Thyroid gland (tissue), 4 donors: ENCODE measurements at regions of chr14 and their contacts with region 1.

Region 1: DNA sequence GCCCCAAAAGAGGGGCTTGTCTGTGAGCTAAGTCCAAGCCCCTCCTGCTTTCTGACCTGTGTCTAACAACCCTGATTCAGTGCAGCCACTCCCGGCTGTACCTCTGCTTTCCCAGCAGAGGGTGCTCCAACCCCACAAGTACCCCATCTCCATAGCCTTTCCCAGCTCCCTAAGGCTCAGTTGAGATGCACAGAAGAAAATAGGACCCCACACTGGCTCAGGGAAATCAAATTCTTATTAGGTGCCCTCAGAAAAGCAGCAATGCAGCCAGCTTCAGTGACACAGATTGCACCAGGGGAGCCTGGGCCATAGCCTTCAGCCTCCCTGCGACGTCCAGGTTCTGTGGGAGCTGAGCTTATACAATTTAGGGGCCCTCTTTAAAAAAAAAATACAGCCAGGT is 49.9 kb downstream of the LRRC74A start:
- DNase-seq: peak; percentile 52 to 62
- H3K4me3 ChIP-seq: no peak overlapping the region
- H3K27ac ChIP-seq: no peak overlapping the region
- H3K4me1 ChIP-seq: no peaks in the 10 kb centered on the region
- H3K27me3 ChIP-seq: no peaks in the 10 kb centered on the region
- CTCF ChIP-seq: peak; percentile 68 to 97 (median 95)
- POLR2A ChIP-seq: no peak

Region 2: DNA sequence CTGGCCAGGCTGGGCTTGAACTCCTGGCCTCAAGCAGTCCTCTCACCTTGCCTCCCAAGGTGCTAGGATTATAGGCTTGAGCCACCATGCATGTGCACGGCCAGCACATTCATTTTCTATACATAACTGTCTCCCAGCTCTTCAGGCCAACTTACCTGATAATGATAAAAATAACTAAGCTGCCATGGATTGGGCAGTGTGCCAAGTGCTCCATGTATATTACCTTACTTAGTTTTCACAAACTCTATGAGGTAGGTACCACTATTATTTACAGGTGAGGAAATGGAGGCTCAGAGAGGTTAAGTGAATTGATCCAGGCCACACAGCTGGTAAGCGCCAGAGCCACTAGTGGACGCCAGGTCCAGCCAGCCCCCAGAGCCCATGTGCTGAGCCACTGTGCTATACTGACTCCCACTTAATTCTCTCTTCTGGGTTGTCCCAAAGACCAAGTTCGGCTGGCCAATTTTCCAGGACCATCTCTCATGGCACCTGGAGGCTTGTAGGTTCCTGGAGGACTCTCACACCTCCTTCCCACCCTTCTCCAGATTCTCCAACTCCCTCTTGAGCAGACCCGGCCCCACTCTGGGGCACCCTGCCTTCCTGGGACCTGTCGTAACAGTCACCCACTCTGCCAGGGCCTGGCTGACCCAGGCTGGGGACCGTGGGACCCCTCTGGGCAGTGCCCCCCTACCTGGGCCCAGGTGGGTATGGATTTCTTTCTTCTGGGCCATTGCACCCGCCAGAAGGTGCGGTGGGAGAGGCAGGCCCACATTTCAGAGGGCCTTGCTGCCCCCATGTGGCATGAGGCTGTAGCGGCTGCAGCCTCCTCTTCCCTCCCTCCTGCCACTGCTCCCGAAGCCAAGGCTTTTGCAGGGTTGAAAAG is 191.8 kb after region 1 on chr14:
- intact Hi-C with region 1: loop called (anchors 2 kb)
- DNase-seq: peak; percentile 74 to 76
- H3K4me3 ChIP-seq: no peak overlapping the region
- H3K27ac ChIP-seq: no peak overlapping the region
- H3K4me1 ChIP-seq: peaks cover 5 to 22% of the 10 kb centered on the region in 2 donors
- H3K27me3 ChIP-seq: no peaks in the 10 kb centered on the region
- CTCF ChIP-seq: peak; percentile 63 to 94 (median 86)
- POLR2A ChIP-seq: no peak

Region 3: DNA sequence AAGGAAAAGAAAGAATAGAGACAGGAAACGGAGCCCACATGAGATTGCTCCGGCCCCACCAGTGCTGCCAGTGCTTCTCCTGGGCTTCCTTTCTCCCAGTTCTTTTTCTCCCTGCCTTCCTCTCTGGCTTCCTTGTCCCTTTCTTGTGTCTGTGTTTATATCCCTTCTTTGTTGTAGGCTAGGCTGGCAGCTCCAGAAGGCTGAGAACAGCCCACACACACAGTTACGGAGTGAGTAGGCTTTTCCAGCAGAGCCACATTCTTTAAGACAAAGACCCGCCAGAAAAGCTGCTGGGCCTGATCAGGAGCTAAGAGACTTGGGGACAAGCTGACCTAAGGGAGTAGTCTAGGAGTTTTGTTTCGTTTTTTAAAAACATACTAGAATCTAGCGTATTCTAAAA is 235.0 kb after region 1 on chr14:
- intact Hi-C with region 1: no loop called
- DNase-seq: peak; percentile 80
- H3K4me3 ChIP-seq: no peak overlapping the region
- H3K27ac ChIP-seq: peak overlapping the region; percentile 78 to 86 (median 79)
- H3K4me1 ChIP-seq: peaks cover 17 to 47% of the 10 kb centered on the region in 2 donors
- H3K27me3 ChIP-seq: no peaks in the 10 kb centered on the region
- CTCF ChIP-seq: no peak
- POLR2A ChIP-seq: peak in 1 of 2 donors; percentile 18

Region 4: GRCh38 chr14:77203611-77204477 is 327.8 kb after region 1 on chr14:
- intact Hi-C with region 1: no loop called
- DNase-seq: no peak
- H3K4me3 ChIP-seq: no peak overlapping the region
- H3K27ac ChIP-seq: no peak overlapping the region
- H3K4me1 ChIP-seq: no peaks in the 10 kb centered on the region
- H3K27me3 ChIP-seq: no peaks in the 10 kb centered on the region
- CTCF ChIP-seq: no peak
- POLR2A ChIP-seq: no peak